HEK293 (cell line): ENCODE measurements at regions of chr2 and their contacts with region 1.

Region 1: GRCh38 chr2:102615622-102616436 is 3.5 kb upstream of the SLC9A2 start:
- H3K4me3 ChIP-seq: no peak overlapping the region
- H3K27ac ChIP-seq: no peak overlapping the region
- H3K4me1 ChIP-seq: no peaks in the 10 kb centered on the region
- CTCF ChIP-seq: 0 out of 2 replicates have a peak, but pooled peaks have one; percentile 36

Region 2: DNA sequence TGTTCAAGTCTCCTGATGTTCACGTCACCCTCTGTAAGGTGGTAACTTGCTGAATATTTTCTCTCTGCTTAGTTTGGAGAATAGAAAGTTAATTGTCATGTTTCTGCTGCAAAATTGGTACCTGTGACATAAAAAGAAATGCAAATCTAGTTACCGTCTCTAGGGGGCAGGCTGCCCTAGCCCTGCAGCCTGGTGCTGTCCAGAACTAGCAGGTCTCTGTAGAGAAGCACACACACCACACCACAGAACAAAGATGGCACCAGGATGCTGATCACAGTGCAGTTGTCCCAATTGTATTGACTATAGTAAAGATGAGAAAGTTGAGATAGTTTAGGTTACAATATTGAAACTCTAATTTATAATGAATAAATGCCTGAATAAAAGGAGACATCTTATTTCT is 95.8 kb before region 1 on chr2:
- CTCF ChIA-PET with region 1: interaction called, 10 read pairs
- POLR2A ChIA-PET with region 1: no interaction called
- H3K4me3 ChIP-seq: no peak overlapping the region
- H3K27ac ChIP-seq: no peak overlapping the region
- H3K4me1 ChIP-seq: no peaks in the 10 kb centered on the region
- CTCF ChIP-seq: 0 out of 2 replicates have a peak, but pooled peaks have one; percentile 24

Region 3: DNA sequence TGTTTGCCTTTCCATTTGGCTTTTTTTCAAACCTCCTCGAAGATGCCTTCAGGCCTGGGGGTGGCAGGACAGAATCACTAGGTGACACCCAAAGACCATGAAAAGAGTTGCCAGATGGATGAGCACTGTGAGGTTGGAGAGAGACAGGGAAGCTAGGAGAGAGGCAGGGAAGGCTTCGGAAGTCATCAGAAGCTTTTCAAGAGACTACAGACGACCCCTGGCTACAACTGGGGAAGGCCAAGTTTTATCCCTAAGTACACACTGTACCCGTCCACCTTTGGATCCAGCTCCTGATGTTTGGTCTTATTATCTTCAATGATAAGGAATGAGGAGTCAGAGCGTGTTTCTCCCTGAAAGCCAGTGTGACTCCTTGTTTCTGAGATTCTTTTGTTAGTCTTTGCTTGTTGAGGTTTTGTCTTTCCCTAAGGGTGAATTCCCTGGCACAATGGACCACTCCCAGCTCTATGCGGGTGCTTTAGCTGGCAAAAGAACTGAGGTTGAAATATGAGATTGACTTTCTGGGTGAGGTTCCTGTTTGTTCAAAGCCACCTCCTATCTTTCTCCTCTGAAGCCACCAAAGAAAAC is 29.9 kb before region 1 on chr2:
- CTCF ChIA-PET with region 1: interaction called, 10 read pairs
- POLR2A ChIA-PET with region 1: no interaction called
- H3K4me3 ChIP-seq: no peak overlapping the region
- H3K27ac ChIP-seq: no peak overlapping the region
- H3K4me1 ChIP-seq: no peaks in the 10 kb centered on the region
- CTCF ChIP-seq: no peak

Region 4: GRCh38 chr2:102637358-102637757 is 21.5 kb after region 1 on chr2:
- CTCF ChIA-PET with region 1: interaction called, 11 read pairs
- POLR2A ChIA-PET with region 1: no interaction called
- H3K4me3 ChIP-seq: no peak overlapping the region
- H3K27ac ChIP-seq: no peak overlapping the region
- H3K4me1 ChIP-seq: no peaks in the 10 kb centered on the region
- CTCF ChIP-seq: no peak

Region 5: GRCh38 chr2:102703748-102704147 is 87.9 kb after region 1 on chr2:
- CTCF ChIA-PET with region 1: interaction called, 20 read pairs
- POLR2A ChIA-PET with region 1: no interaction called
- H3K4me3 ChIP-seq: no peak overlapping the region
- H3K27ac ChIP-seq: no peak overlapping the region
- H3K4me1 ChIP-seq: no peaks in the 10 kb centered on the region
- CTCF ChIP-seq: 0 out of 2 replicates have a peak, but pooled peaks have one; percentile 39